ENCODE measurements at regions of chr9 and their contacts with region 1.

Region 1: DNA sequence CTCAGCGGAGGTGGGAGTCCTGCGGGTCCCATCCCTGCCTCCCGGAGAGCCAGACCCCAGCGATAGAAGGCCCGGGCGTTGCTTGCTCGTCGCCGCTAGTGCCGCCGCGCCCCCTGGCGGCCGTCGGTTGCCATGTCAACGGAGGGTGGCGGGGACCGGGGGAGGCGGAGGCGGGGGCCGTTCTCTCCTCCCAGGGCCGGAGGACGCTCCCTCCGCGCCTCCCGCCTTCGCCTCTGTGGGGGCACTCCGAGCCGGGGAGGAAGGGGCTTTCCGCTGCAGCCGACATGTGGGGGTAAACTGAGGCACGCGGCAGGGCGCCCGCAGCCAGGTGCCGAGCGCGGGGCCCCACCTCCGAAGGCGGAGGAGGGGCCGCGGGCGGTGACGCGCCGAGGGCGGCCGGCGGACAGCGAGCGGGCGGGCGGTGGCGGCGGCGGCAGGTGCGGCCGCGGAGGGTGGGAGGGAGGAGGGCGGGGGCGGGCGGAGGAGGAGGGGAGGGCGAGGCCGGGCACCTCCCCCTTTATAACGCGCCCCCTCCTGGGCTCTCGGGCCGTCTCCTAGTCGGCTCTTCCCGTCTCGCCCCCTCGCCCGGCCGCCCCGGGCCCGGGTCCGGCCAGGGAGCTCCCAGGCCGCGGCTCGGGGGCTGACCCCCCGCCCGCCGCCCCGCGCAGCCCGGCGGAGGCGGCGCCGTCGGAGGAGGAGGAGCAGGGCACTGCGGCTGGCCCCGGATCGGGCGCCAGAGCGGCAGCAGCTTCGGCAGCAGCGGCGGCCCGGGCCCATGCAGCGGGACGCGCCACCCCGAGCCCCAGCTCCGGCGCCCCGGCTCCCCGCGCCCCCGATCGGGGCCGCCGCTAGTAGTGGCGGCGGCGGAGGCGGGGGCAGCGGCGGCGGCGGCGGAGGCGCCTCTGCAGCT is 556 bp upstream of the CDK9 start:
- DNase-seq: peak; percentile 90
- H3K4me3 Mint-ChIP-seq: peak overlapping the region; percentile 96
- H3K27ac Mint-ChIP-seq: peak overlapping the region; percentile 96
- H3K4me1 Mint-ChIP-seq: peaks cover 72% of the 10 kb centered on the region
- H3K27me3 Mint-ChIP-seq: no peaks in the 10 kb centered on the region

Region 2: DNA sequence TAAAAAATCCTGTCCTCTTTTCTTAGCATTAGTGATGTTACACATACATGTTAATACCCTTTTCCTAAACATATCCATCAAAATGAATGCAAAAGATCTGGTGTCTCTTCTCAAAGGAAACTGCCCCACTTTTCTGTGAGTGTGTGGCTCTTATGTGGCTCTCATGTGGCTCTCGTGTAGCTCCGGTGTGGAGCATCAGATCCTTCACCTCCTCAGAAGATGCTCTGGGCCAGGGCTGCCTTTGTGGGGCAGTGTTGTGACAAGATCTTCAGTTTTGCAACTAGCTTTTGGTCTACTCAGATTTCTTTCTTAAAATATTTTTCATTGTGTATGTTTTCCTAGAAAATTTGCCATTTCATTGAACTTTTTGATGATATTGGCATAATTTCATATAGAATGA is 501.4 kb before region 1 on chr9:
- CTCF ChIA-PET with region 1: no interaction called
- POLR2A ChIA-PET with region 1: no interaction called
- DNase-seq: peak; percentile 34
- H3K4me3 Mint-ChIP-seq: no peak overlapping the region
- H3K27ac Mint-ChIP-seq: no peak overlapping the region
- H3K4me1 Mint-ChIP-seq: no peaks in the 10 kb centered on the region
- H3K27me3 Mint-ChIP-seq: peaks cover 33% of the 10 kb centered on the region

Region 3: DNA sequence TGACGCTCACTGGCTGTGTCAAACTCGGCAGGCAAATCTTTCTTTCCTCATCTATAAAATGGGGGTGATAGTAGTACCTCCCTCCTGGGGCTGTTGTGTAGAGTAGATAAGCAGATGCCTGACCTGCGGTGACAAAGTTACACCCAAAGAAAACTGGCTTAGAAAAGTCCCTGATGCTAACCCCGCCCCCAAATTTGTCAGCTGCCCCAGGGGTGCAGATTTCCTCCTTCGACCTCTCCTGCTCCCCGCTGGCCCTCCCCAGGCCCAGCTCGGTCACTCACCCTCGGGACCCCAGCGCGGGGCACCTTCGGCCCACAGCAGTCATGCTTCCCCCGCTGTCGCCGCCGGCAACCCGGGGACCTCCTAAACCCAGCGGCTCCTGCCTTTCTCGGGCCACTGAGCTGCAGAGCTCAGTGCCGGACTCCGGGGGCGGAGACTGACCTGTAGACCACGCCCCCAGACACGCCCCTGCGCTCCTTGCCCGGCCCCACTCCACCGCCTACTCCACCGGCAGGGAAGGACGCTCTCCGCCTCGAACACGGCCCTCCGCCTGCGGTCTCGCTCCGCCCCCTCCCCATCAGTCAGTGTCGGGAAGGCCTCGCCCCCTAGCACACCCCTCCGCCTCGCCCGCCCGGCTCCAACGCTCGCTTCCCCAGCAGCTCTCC is 14.2 kb before region 1 on chr9:
- CTCF ChIA-PET with region 1: interaction called, 10 read pairs
- POLR2A ChIA-PET with region 1: interaction called, 8 read pairs
- DNase-seq: peak; percentile 96
- H3K4me3 Mint-ChIP-seq: peak overlapping the region; percentile 81
- H3K27ac Mint-ChIP-seq: peak overlapping the region; percentile 84
- H3K4me1 Mint-ChIP-seq: peaks cover 82% of the 10 kb centered on the region
- H3K27me3 Mint-ChIP-seq: no peaks in the 10 kb centered on the region

Measured in activated CD4-positive, alpha-beta T cell treated with anti-CD3 and anti-CD28 coated beads, Interleukin-2, amount 10 ng/mL, durations not matched to agents 7 days and 5 days (primary cell).